GM10248 (cell line): ENCODE measurements at regions of chr10 and their contacts with region 1.

Region 1: GRCh38 chr10:22597138-22597537 is 117.2 kb downstream of the PIP4K2A start:
- DNase-seq: peak; percentile 48
- CTCF ChIP-seq: no peak

Region 2: DNA sequence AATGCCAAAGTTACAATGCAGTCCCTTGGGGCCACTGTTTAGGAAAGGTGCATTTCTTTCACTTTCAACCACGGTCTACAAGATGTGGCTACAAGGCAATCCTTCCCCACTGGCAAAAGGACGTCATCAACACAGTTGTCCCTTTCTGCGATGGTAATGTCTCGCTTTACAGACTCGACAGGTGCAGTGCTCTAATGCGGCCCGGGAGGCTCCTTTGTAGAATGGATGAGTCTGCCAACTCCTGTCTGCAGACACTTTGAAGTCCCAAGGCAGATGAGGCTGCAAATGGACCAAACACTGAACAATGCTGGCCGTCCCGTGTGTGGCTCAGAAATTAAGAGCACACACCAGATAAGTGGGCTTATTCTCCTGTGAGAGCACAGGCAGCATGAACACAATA is 16.4 kb before region 1 on chr10:
- CTCF ChIA-PET with region 1: interaction called, 15 read pairs
- POLR2A ChIA-PET with region 1: no interaction called
- DNase-seq: no peak
- CTCF ChIP-seq: no peak